A549 (cell line): ENCODE measurements at regions of chr6 and their contacts with region 1.

Region 1: DNA sequence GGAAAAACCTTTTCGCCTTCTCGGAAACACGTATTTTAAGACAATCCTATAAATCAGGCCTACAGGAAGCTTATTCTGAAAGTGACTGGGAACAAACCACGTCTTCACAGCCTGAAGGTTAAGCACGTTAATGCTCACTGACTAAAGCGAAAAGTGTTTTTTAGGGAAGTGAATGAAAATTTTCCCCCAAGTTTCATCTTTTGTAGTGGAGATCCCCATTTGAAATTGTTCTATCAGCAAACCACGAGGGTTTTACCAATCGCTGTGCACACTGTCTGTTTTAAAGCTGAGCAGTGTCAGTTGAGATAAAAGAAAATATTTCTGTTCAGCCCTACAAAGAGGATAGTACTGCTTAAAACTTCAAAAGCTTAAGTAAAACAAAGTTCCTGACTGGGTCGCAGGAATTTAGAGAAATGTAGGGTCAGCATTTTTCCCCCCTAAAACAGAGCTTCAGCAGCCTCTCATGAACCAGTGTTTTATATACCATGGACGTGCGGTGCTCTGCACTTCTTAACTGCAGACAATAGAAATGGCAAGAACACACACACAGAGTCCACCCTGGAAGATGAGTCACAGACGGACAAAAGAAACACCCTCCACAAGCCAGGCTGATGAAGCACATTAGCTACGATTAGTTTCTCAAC is 34.9 kb downstream of the SLC22A23 start:
- DNase-seq: peak in 1 of 2 experiments; percentile 38
- ATAC-seq: peak; percentile 62 to 85; a peak in 5 of 6 replicates
- H3K4me3 ChIP-seq: no peak overlapping the region
- H3K27ac ChIP-seq: peak overlapping the region; percentile 13 to 61; a peak in 3 of 6 replicates
- H3K4me1 ChIP-seq: peaks cover 62% of the 10 kb centered on the region
- CTCF ChIP-seq: no peak
- EP300 ChIP-seq: no peak
- POLR2A ChIP-seq: no peak
- RAD21 ChIP-seq: no peak

Region 2: GRCh38 chr6:3372007-3372846 is 49.7 kb before region 1 on chr6:
- CTCF ChIA-PET with region 1: no interaction called
- POLR2A ChIA-PET with region 1: no interaction called
- DNase-seq: no peak
- ATAC-seq: peak; percentile 15 to 64; a peak in 3 of 6 replicates
- H3K4me3 ChIP-seq: no peak overlapping the region
- H3K27ac ChIP-seq: peak overlapping the region; percentile 40 to 49; a peak in 2 of 6 replicates
- H3K4me1 ChIP-seq: peaks cover 37% of the 10 kb centered on the region
- CTCF ChIP-seq: no peak
- EP300 ChIP-seq: no peak
- POLR2A ChIP-seq: no peak
- RAD21 ChIP-seq: no peak

Region 3: GRCh38 chr6:3410385-3411360 is 11.2 kb before region 1 on chr6:
- CTCF ChIA-PET with region 1: interaction called, 10 read pairs
- POLR2A ChIA-PET with region 1: no interaction called
- DNase-seq: peak in 1 of 2 experiments; percentile 58
- ATAC-seq: peak; percentile 78 to 91; a peak in 4 of 6 replicates
- H3K4me3 ChIP-seq: no peak overlapping the region
- H3K27ac ChIP-seq: peak overlapping the region; percentile 35 to 54; a peak in 5 of 6 replicates
- H3K4me1 ChIP-seq: peaks cover 48% of the 10 kb centered on the region
- CTCF ChIP-seq: peak; percentile 63
- EP300 ChIP-seq: no peak
- POLR2A ChIP-seq: no peak
- RAD21 ChIP-seq: peak; percentile 54 to 69